Activated T-helper 2 cell treated with anti-CD3 and anti-CD28 coated beads, Interferon-gamma antibody, Interleukin-2, Interleukin-4, amounts not matched to agents 10 μg/mL and 5 μg/mL and 100 μg/mL, durations not matched to agents 14 hours and 24 hours and 36 hours (primary cell): ENCODE measurements at regions of chr2 and their contacts with region 1.

Region 1: GRCh38 chr2:136110526-136110925 is 7.4 kb downstream of the CXCR4 start:
- DNase-seq: no peak
- H3K4me3 Mint-ChIP-seq: no peak overlapping the region
- H3K27ac Mint-ChIP-seq: no peak overlapping the region
- H3K4me1 Mint-ChIP-seq: peaks cover 33% of the 10 kb centered on the region
- H3K27me3 Mint-ChIP-seq: no peaks in the 10 kb centered on the region

Region 2: DNA sequence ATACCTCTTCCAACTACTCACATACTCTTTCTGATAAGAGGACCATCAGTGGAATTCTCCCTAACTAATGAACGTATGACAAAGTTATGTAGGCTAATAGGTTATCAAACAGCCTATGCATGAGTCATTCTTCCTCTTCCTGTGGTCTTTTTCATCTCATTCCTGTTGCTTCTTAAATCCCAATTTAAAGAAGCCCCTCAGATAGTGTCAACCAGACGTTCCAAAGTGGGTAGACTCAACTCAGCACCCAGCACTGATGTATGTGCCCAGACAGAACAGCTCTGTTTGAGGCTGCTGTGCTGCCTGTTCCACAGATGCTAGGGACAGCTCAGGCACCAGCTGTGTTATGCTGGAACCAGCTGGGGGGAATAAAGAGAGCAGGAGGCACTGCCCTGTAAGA is 45.1 kb before region 1 on chr2:
- intact Hi-C with region 1: no loop called
- DNase-seq: no peak
- H3K4me3 Mint-ChIP-seq: no peak overlapping the region
- H3K27ac Mint-ChIP-seq: no peak overlapping the region
- H3K4me1 Mint-ChIP-seq: peaks cover 45% of the 10 kb centered on the region
- H3K27me3 Mint-ChIP-seq: no peaks in the 10 kb centered on the region

Region 3: DNA sequence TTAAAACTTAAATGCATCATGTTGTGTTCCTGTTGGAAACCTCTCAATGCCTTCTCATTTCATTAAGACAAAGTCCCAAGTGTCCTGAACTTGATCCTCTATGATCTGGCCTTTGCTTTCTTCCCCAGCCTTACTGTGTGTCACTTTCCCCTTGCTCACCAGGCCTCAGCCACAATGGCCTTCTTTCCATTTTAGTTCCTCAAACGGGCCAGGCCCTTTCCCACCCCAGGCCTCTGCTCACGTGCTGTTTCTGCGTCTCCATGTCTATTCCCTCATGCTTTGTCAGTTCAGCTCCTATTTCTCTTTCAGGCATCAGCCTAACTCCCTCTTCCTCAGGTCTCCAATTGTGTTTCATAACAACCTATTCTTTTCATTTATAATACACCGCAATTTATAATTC is 12.1 kb before region 1 on chr2:
- intact Hi-C with region 1: loop called (anchors 2 kb)
- DNase-seq: no peak
- H3K4me3 Mint-ChIP-seq: no peak overlapping the region
- H3K27ac Mint-ChIP-seq: no peak overlapping the region
- H3K4me1 Mint-ChIP-seq: peaks cover 12% of the 10 kb centered on the region
- H3K27me3 Mint-ChIP-seq: no peaks in the 10 kb centered on the region